AG04450 (cell line): ENCODE measurements at regions of chr16 and their contacts with region 1.

Region 1: DNA sequence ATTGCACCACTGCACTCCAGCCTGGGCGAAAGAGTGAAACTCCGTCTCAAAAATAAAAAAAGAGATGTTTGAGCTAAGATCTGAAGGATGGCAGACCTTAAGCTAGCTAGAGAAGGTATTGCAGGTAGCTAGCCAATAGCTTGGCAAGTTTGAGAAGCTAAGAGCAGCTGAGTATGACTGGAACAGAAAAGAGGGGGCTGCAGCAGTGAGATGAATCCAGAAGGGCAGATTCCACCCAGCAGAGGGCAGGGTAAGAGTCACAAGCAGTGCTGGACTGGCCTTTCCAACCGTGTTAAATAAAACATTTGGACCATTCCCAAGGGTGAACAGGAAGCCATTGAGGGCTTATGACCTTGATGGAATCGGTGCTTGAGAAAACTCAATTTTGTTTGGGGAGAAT is 5.7 kb upstream of the PHAF1 start:
- DNase-seq: no peak
- H3K4me3 ChIP-seq: no peak overlapping the region
- H3K27ac ChIP-seq: no peak overlapping the region
- H3K27me3 ChIP-seq: no peaks in the 10 kb centered on the region
- CTCF ChIP-seq: peak; percentile 37

Region 2: GRCh38 chr16:66954097-66954659 is 149.9 kb before region 1 on chr16:
- CTCF ChIA-PET with region 1: interaction called, 14 read pairs
- POLR2A ChIA-PET with region 1: no interaction called
- DNase-seq: peak; percentile 59
- H3K4me3 ChIP-seq: no peak overlapping the region
- H3K27ac ChIP-seq: no peak overlapping the region
- H3K27me3 ChIP-seq: peaks cover 21% of the 10 kb centered on the region
- CTCF ChIP-seq: peak; percentile 89

Region 3: GRCh38 chr16:66977341-66978113 is 126.5 kb before region 1 on chr16:
- CTCF ChIA-PET with region 1: interaction called, 39 read pairs
- POLR2A ChIA-PET with region 1: no interaction called
- DNase-seq: peak; percentile 56
- H3K4me3 ChIP-seq: no peak overlapping the region
- H3K27ac ChIP-seq: no peak overlapping the region
- H3K27me3 ChIP-seq: no peaks in the 10 kb centered on the region
- CTCF ChIP-seq: peak; percentile 94

Region 4: GRCh38 chr16:67017810-67018488 is 86.1 kb before region 1 on chr16:
- CTCF ChIA-PET with region 1: interaction called, 127 read pairs
- POLR2A ChIA-PET with region 1: interaction called, 3 read pairs
- DNase-seq: peak; percentile 77
- H3K4me3 ChIP-seq: no peak overlapping the region
- H3K27ac ChIP-seq: no peak overlapping the region
- H3K27me3 ChIP-seq: peaks cover 13% of the 10 kb centered on the region
- CTCF ChIP-seq: peak; percentile 74

Region 5: GRCh38 chr16:67055712-67056487 is 48.2 kb before region 1 on chr16:
- CTCF ChIA-PET with region 1: no interaction called
- POLR2A ChIA-PET with region 1: no interaction called
- DNase-seq: peak; percentile 81
- H3K4me3 ChIP-seq: no peak overlapping the region
- H3K27ac ChIP-seq: peak overlapping the region; percentile 52
- H3K27me3 ChIP-seq: no peaks in the 10 kb centered on the region
- CTCF ChIP-seq: no peak

Region 6: GRCh38 chr16:67115639-67116038 is 11.6 kb after region 1 on chr16:
- CTCF ChIA-PET with region 1: interaction called, 10 read pairs
- POLR2A ChIA-PET with region 1: interaction called, 3 read pairs
- DNase-seq: peak; percentile 61
- H3K4me3 ChIP-seq: no peak overlapping the region
- H3K27ac ChIP-seq: peak overlapping the region; percentile 68
- H3K27me3 ChIP-seq: no peaks in the 10 kb centered on the region
- CTCF ChIP-seq: no peak